ENCODE measurements at regions of chr1 and their contacts with region 1.

Region 1: GRCh38 chr1:56881417-56881816 is 26.8 kb downstream of the C8A start:
- DNase-seq: no peak
- H3K4me3 ChIP-seq: no peak overlapping the region
- H3K27ac ChIP-seq: no peak overlapping the region
- H3K4me1 ChIP-seq: no peaks in the 10 kb centered on the region
- H3K27me3 ChIP-seq: no peaks in the 10 kb centered on the region
- CTCF ChIP-seq: no peak

Region 2: GRCh38 chr1:56934430-56935060 is 53.1 kb after region 1 on chr1:
- CTCF ChIA-PET with region 1: no interaction called
- dilution Hi-C with region 1: loop called (anchors 5 kb)
- in situ Hi-C with region 1: no loop called
- intact Hi-C with region 1: no loop called
- DNase-seq: no peak
- H3K4me3 ChIP-seq: no peak overlapping the region
- H3K27ac ChIP-seq: no peak overlapping the region
- H3K4me1 ChIP-seq: no peaks in the 10 kb centered on the region
- H3K27me3 ChIP-seq: no peaks in the 10 kb centered on the region
- CTCF ChIP-seq: no peak